ENCODE measurements at regions of chr5 and their contacts with region 1.

Region 1: GRCh38 chr5:178732281-178732680 is 1.8 kb upstream of the ZNF354A start:
- DNase-seq: no peak
- H3K4me3 ChIP-seq: no peak overlapping the region
- H3K27ac ChIP-seq: no peak overlapping the region
- H3K4me1 ChIP-seq: no peaks in the 10 kb centered on the region
- H3K27me3 ChIP-seq: no peaks in the 10 kb centered on the region
- CTCF ChIP-seq: no peak

Region 2: DNA sequence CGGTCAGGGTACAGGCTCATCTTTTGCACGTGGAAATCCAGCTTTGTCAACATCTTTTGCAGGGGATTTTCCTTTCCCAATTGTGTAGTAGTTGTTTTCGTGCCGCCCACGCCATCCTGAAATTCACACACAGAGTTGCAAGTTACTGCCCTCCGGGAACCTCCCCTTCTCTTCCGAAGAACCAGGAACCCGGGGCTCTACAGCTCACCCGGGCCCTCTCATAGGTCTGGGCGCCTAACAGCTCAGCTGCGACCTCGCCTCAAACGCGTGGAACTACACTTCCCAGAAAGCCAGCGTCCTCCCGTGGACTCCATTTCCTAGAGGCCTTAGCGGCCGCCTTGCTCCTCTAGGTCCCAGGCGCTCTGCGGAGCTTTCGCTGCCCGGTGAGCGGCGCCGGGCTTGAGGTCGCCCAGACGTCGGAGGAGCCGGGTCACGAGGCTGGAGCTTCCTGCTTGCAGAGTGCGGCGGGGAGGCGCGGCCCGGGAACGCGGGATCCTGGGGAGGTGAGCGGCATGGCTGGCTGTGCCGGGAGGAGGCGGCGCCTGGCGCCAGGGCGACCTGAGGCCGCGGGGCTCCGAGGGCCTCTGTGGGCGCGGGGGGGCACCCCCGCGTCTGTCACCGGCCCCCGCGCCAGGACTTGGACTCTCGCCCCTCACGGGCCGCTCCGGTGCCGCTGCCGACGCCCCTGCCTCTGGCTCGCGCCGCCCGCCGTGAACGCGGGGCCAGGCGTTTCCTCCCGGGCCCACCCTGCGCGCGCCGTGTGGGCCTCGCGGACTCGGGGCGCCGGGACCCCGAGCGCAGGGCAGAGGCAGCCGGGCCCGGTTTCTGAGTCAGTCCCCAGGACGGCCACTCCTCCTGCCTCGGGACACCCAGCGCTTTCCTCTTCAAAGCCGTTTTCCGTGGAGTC is 127.6 kb after region 1 on chr5 and contains the start of gene ZNF354B:
- intact Hi-C with region 1: loop called (anchors 5 kb)
- DNase-seq: peak; percentile 89
- H3K4me3 ChIP-seq: peak within 1 kb of the TSS; percentile 88
- H3K27ac ChIP-seq: peak within 1 kb of the TSS; percentile 79
- H3K4me1 ChIP-seq: no peaks in the 10 kb centered on the region
- H3K27me3 ChIP-seq: no peaks in the 10 kb centered on the region
- CTCF ChIP-seq: no peak
- total RNA-seq, gene ZNF354B: 7.5 to 9.3 TPM

Region 3: DNA sequence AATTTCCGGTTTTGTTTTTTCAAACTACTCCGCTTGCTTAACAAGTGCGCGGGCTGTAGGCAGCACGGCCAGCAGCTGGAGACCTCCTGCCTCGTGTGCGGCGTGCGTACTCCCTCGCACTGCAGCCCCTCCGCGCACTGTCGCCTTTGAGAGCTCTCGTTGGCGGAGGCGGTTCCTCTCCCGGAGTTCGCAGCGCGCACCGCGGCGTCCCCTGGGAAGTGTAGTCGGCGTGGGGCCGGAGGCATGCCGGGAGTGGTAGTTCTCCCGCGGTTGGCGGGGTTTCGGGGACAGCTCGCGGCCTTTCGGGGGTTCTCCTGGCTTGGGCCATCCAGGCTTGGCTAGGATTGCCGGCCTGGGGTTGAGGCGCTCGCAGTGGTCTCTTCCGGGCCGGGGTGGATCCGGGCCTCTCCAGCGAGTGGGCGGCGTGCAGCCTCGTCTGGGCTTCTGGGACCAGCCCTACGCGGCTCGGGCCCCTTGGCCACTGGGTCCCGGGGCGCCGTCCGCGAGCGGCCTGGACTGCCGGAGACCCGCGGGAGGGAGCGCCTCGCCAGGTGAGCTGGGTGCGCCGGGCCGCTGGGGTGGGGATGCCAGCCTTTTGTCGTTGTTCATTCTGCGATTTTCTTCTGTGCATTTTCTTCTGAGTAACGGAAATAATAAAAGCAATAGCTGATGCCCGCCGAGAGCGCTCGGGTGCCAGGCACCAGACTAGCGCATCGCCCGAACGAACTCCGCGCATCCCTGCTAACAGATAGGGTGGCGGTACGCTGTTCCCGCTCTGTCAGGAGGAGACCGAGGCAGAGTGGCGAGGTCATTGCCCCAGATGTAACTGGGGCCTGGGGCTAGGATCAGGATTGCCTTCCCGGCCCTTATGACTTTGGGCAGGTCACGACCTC is 328.1 kb after region 1 on chr5 and contains the start of gene ZNF354C:
- intact Hi-C with region 1: loop called (anchors 5 kb)
- DNase-seq: peak; percentile 89
- H3K4me3 ChIP-seq: peak within 1 kb of the TSS; percentile 67
- H3K27ac ChIP-seq: peak within 1 kb of the TSS; percentile 7
- H3K4me1 ChIP-seq: no peaks in the 10 kb centered on the region
- H3K27me3 ChIP-seq: no peaks in the 10 kb centered on the region
- CTCF ChIP-seq: no peak
- total RNA-seq, gene ZNF354C: 1.7 to 1.9 TPM